H1 (cell line): ENCODE measurements at regions of chr19 and their contacts with region 1.

Region 1: DNA sequence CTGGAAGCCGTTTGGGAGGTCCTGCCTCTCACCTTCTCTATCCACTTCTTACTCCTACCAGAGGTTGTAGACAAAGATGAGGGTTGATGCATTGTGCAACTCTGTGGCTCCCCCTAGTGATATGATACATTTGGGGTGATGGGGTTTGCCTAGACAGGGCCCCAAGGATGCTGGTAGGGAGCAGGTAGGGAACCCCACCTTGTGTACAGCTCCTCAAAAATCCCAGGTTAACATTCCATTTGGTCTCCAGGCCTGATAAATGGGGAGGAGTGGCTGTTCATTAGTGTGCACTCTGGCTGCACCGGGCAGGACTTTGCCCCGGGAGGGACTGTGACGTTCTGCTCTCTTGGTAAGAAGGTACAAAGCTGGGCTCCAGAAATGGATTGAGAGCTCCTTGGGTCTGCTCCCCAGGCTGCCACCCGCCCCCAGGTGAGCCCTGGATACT is 19.2 kb downstream of the SIGLEC8 start:
- DNase-seq: no peak
- H3K4me3 ChIP-seq: no peak overlapping the region
- H3K27ac ChIP-seq: no peak overlapping the region
- H3K4me1 ChIP-seq: no peaks in the 10 kb centered on the region
- H3K27me3 ChIP-seq: no peaks in the 10 kb centered on the region
- CTCF ChIP-seq: peak; percentile 39 to 81 (median 75)
- EP300 ChIP-seq: no peak
- POLR2A ChIP-seq: no peak
- RAD21 ChIP-seq: peak; percentile 73 to 79

Region 2: GRCh38 chr19:51393959-51394836 is 44.8 kb before region 1 on chr19:
- CTCF ChIA-PET with region 1: interaction called, 29 read pairs
- POLR2A ChIA-PET with region 1: no interaction called
- DNase-seq: peak; percentile 94 to 98
- H3K4me3 ChIP-seq: peak overlapping the region; percentile 67 to 91 (median 83)
- H3K27ac ChIP-seq: peak overlapping the region; percentile 86
- H3K4me1 ChIP-seq: peaks cover 0 to 7% (median under 1%) of the 10 kb centered on the region in 4 experiments; a peak in 4 of 7 replicates
- H3K27me3 ChIP-seq: no peaks in the 10 kb centered on the region
- CTCF ChIP-seq: no peak
- EP300 ChIP-seq: no peak
- POLR2A ChIP-seq: peak; percentile 75 to 85
- RAD21 ChIP-seq: no peak; a peak in 1 of 4 replicates

Region 3: DNA sequence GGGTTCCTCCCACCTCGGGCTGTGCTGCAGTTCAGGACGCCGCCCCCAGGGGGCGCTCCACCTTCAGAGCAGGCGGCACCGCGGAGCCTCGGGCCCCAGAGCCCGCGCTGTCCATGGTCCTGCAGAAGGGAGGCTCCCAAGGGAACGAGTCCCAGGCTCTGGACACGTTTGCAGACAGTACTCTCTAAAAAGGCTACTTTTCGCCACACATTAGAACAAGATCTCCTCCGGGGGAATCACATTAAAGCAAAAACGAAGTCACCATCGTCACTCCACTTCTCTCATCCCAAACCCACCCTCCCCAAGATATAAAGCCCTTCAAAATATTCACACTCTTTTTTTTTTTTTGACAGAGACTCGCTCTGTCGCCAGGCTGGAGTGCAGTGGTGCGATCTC is 17.0 kb before region 1 on chr19:
- CTCF ChIA-PET with region 1: interaction called, 44 read pairs
- POLR2A ChIA-PET with region 1: interaction called, 3 read pairs
- DNase-seq: peak; percentile 69 to 100
- H3K4me3 ChIP-seq: peak overlapping the region in 3 of 4 experiments; percentile 46 to 58 (median 49); a peak in 6 of 8 replicates
- H3K27ac ChIP-seq: no peak overlapping the region
- H3K4me1 ChIP-seq: peaks cover 0 to 11% (median 3%) of the 10 kb centered on the region in 4 experiments; a peak in 2 of 7 replicates
- H3K27me3 ChIP-seq: peaks cover 0 to 5% (median 2%) of the 10 kb centered on the region in 4 experiments; a peak in 3 of 7 replicates
- CTCF ChIP-seq: peak; percentile 92 to 97 (median 95)
- EP300 ChIP-seq: 0 out of 3 replicates have a peak, but pooled peaks of 1 of the 2 experiments have one; percentile 23
- POLR2A ChIP-seq: no peak
- RAD21 ChIP-seq: peak; percentile 65 to 77

Region 4: GRCh38 chr19:51525686-51526085 is 86.6 kb after region 1 on chr19:
- CTCF ChIA-PET with region 1: no interaction called
- POLR2A ChIA-PET with region 1: no interaction called
- DNase-seq: no peak
- H3K4me3 ChIP-seq: no peak overlapping the region
- H3K27ac ChIP-seq: no peak overlapping the region
- H3K4me1 ChIP-seq: no peaks in the 10 kb centered on the region
- H3K27me3 ChIP-seq: no peaks in the 10 kb centered on the region
- CTCF ChIP-seq: no peak
- EP300 ChIP-seq: no peak
- POLR2A ChIP-seq: no peak
- RAD21 ChIP-seq: no peak

Region 5: DNA sequence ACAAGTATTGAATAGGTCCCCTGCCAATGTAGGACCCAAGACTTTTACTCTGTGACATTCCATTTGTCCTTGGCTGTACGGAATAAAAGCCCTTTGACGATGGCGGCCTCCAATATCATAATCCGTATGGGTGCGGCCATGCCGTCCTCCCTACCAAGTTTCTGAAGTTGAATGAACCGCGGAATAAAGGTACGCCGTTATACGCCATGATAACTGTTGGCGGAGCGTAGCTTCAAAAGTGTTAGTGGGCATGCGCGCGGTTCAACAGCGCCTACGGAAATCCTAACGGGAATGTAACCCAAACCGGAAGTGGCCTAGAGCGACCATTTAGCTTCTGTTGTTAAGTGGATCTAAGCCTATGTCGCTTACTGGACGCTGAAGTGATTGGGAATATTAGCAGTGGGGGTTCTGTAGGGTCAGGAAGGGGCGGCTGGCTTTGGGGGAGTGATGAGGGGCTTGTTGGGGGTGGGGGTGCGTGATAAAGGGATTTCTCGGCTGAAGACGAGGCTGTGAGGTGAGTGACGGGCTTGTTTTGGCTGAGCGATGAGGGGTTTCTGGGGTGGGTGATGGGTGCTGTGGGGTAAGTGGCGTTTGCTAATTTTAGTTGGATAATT is 132.0 kb after region 1 on chr19 and contains the start of gene ZNF175:
- CTCF ChIA-PET with region 1: no interaction called
- POLR2A ChIA-PET with region 1: no interaction called
- DNase-seq: peak; percentile 91
- H3K4me3 ChIP-seq: peak within 1 kb of the TSS; percentile 64 to 90 (median 70)
- H3K27ac ChIP-seq: no peak within 1 kb of the TSS
- H3K4me1 ChIP-seq: peaks cover 0 to 3% (median 2%) of the 10 kb centered on the region in 4 experiments; a peak in 4 of 7 replicates
- H3K27me3 ChIP-seq: no peaks in the 10 kb centered on the region
- CTCF ChIP-seq: no peak
- EP300 ChIP-seq: no peak
- POLR2A ChIP-seq: peak in 1 of 2 experiments; percentile 53; a peak in 1 of 3 replicates
- RAD21 ChIP-seq: no peak
- total RNA-seq, gene ZNF175: 11.0 and 11.1 TPM in 2 replicates

Region 6: DNA sequence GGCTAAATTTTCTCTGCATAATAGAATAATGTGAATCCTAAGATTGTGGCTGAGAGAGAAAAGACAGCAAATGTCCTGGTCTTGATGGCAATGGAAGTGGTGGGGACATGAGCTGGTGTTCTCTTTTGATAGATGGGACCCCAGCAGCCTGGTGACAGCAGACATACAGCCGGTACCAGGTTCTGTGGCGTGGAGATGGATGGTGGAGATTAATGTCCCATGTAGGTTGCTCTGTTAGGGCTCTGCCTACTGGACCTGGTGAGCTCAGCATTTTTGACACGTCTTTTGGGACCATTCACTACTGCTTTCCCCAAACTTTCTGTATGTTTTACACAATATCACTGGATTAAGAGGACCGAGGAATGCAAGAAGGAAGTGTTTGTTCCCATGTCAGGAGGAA is 215.7 kb after region 1 on chr19:
- CTCF ChIA-PET with region 1: interaction called, 15 read pairs
- POLR2A ChIA-PET with region 1: no interaction called
- DNase-seq: no peak
- H3K4me3 ChIP-seq: no peak overlapping the region
- H3K27ac ChIP-seq: no peak overlapping the region
- H3K4me1 ChIP-seq: no peaks in the 10 kb centered on the region
- H3K27me3 ChIP-seq: no peaks in the 10 kb centered on the region
- CTCF ChIP-seq: peak in 2 of 3 experiments; percentile 4 to 13; a peak in 2 of 4 replicates
- EP300 ChIP-seq: no peak
- POLR2A ChIP-seq: no peak
- RAD21 ChIP-seq: peak; percentile 8 to 18; a peak in 2 of 4 replicates